H1 (cell line): ENCODE measurements at regions of chr3 and their contacts with region 1.

Region 1: GRCh38 chr3:186540221-186540834 is 3.9 kb downstream of the CRYGS start:
- DNase-seq: peak; percentile 39 to 83
- H3K4me3 ChIP-seq: no peak overlapping the region
- H3K27ac ChIP-seq: no peak overlapping the region
- H3K4me1 ChIP-seq: no peaks in the 10 kb centered on the region
- H3K27me3 ChIP-seq: no peaks in the 10 kb centered on the region
- CTCF ChIP-seq: peak in 2 of 3 experiments; percentile 75 to 77; a peak in 3 of 4 replicates
- EP300 ChIP-seq: no peak
- POLR2A ChIP-seq: no peak
- RAD21 ChIP-seq: peak; percentile 94 to 95

Region 2: DNA sequence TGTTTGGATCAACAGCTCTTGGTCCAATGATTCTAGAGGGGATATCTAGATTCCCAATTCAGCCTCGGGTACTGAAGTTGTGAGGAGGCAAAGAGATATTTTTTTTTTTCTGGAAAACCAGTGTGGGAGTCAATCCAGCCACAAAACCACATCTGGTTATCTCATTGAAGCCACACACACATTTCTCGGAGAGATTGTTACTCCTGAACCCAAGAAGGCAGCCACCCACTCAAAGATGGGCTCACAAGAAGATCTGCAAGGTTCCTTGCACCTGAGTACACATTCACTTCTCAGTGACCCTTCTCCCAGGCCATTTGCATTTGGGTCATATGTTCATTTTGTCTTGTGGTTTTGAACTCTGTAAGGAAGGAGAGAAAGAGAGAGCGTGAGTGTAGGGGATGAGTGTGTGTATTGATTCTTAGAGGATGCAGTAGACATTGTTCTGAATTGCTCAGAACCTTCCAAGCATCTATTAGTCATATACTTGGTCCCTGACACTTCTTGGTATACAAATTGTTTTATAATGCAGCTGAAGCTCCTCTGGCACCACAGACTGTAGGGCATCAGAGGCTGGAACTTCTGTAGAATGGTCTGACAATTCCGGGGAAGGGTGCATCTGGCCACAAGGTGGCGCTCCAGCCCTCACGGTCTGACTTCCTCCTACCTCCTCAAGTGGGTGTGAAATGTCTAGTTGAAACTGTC is 563.2 kb before region 1 on chr3:
- CTCF ChIA-PET with region 1: interaction called, 26 read pairs
- POLR2A ChIA-PET with region 1: no interaction called
- DNase-seq: peak; percentile 41 to 93
- H3K4me3 ChIP-seq: no peak overlapping the region
- H3K27ac ChIP-seq: no peak overlapping the region
- H3K4me1 ChIP-seq: no peaks in the 10 kb centered on the region
- H3K27me3 ChIP-seq: no peaks in the 10 kb centered on the region
- CTCF ChIP-seq: peak; percentile 90 to 99 (median 97)
- EP300 ChIP-seq: no peak
- POLR2A ChIP-seq: no peak
- RAD21 ChIP-seq: peak; percentile 79 to 82

Region 3: GRCh38 chr3:186247821-186248814 is 292.2 kb before region 1 on chr3:
- CTCF ChIA-PET with region 1: interaction called, 76 read pairs
- POLR2A ChIA-PET with region 1: no interaction called
- DNase-seq: no peak
- H3K4me3 ChIP-seq: no peak overlapping the region
- H3K27ac ChIP-seq: no peak overlapping the region
- H3K4me1 ChIP-seq: peaks cover 0 to 3% (median 0%) of the 10 kb centered on the region in 4 experiments; a peak in 1 of 7 replicates
- H3K27me3 ChIP-seq: no peaks in the 10 kb centered on the region
- CTCF ChIP-seq: no peak
- EP300 ChIP-seq: no peak
- POLR2A ChIP-seq: no peak
- RAD21 ChIP-seq: no peak

Region 4: GRCh38 chr3:186277268-186277909 is 262.9 kb before region 1 on chr3:
- CTCF ChIA-PET with region 1: interaction called, 104 read pairs
- POLR2A ChIA-PET with region 1: no interaction called
- DNase-seq: no peak
- H3K4me3 ChIP-seq: no peak overlapping the region
- H3K27ac ChIP-seq: no peak overlapping the region
- H3K4me1 ChIP-seq: no peaks in the 10 kb centered on the region
- H3K27me3 ChIP-seq: no peaks in the 10 kb centered on the region
- CTCF ChIP-seq: peak; percentile 53 to 72 (median 67)
- EP300 ChIP-seq: no peak
- POLR2A ChIP-seq: no peak
- RAD21 ChIP-seq: peak; percentile 86 to 92

Region 5: GRCh38 chr3:186394566-186395217 is 145.6 kb before region 1 on chr3:
- CTCF ChIA-PET with region 1: no interaction called
- POLR2A ChIA-PET with region 1: no interaction called
- DNase-seq: no peak
- H3K4me3 ChIP-seq: no peak overlapping the region
- H3K27ac ChIP-seq: no peak overlapping the region
- H3K4me1 ChIP-seq: no peaks in the 10 kb centered on the region
- H3K27me3 ChIP-seq: no peaks in the 10 kb centered on the region
- CTCF ChIP-seq: no peak
- EP300 ChIP-seq: no peak
- POLR2A ChIP-seq: no peak
- RAD21 ChIP-seq: no peak

Region 6: DNA sequence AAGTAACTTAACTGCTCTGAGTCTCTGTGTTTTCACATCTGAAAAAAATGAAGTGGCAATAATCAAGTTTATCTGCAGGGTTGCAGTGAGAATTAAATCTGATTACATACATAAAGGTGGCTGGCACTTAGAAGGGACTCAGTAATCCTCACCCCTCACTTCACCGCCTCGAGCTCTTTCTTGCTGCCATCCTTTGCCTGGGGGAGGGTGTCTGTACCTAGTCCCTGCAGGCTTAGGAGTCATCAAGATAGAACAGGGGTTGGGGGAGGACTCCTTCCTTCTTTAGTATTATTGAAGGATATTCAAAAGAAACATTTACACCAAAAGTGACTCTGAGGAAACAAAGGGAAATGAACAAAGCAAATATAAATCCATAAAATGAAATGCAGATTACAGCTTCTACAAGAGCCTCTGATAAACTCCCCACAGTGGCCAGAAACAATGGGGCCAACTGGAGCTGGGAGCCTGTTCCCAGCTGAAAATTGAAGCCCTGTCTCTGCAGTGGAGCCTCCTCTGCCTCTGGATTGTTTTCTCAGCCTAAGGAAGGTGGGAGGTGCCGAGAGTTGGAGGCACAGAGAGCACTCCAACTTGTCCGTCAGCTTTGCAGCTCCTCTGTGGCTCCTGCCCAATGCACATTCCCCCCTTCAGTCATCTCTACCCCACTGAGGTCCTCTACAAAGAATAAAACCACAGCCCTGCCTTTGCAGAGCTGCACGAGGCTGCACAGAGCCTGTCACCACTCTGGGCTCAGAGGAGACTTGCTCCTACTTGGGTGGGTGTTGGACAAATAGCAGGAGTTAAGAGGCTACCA is 38.0 kb before region 1 on chr3:
- CTCF ChIA-PET with region 1: interaction called, 13 read pairs
- POLR2A ChIA-PET with region 1: interaction called, 3 read pairs
- DNase-seq: peak in 1 of 2 experiments; percentile 45
- H3K4me3 ChIP-seq: no peak overlapping the region
- H3K27ac ChIP-seq: no peak overlapping the region
- H3K4me1 ChIP-seq: peaks cover 0 to 3% (median 2%) of the 10 kb centered on the region in 4 experiments; a peak in 2 of 7 replicates
- H3K27me3 ChIP-seq: no peaks in the 10 kb centered on the region; a peak in 1 of 7 replicates
- CTCF ChIP-seq: no peak
- EP300 ChIP-seq: no peak
- POLR2A ChIP-seq: no peak
- RAD21 ChIP-seq: no peak

Region 7: GRCh38 chr3:186551387-186551786 is 11.1 kb after region 1 on chr3:
- CTCF ChIA-PET with region 1: interaction called, 57 read pairs
- POLR2A ChIA-PET with region 1: interaction called, 5 read pairs
- DNase-seq: no peak
- H3K4me3 ChIP-seq: no peak overlapping the region
- H3K27ac ChIP-seq: no peak overlapping the region
- H3K4me1 ChIP-seq: no peaks in the 10 kb centered on the region
- H3K27me3 ChIP-seq: no peaks in the 10 kb centered on the region
- CTCF ChIP-seq: no peak
- EP300 ChIP-seq: no peak
- POLR2A ChIP-seq: no peak
- RAD21 ChIP-seq: no peak

Region 8: DNA sequence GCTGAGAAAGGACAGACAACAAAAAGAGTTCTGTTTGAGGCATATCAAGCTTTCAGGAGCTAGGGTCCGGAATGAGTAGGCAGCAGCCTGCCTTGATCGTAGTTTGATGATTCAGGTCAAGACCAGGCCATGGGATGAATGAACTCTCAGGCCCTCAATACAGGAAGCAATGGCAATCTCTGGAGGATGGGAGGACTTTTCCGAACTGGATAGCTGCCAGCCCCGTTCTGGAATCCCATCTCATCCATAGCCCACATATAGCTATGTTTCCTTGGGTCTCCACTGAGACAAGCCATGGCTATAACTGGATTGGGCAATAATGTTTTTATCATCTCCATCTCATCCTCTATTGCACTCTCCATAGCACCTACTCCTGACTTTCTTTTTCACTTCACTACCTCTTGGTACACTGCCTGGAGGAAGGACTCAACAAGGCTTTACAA is 85.3 kb after region 1 on chr3:
- CTCF ChIA-PET with region 1: no interaction called
- POLR2A ChIA-PET with region 1: no interaction called
- DNase-seq: no peak
- H3K4me3 ChIP-seq: no peak overlapping the region
- H3K27ac ChIP-seq: no peak overlapping the region
- H3K4me1 ChIP-seq: no peaks in the 10 kb centered on the region
- H3K27me3 ChIP-seq: peaks cover 0 to 2% (median 0%) of the 10 kb centered on the region in 4 experiments; a peak in 1 of 7 replicates
- CTCF ChIP-seq: no peak
- EP300 ChIP-seq: no peak
- POLR2A ChIP-seq: no peak
- RAD21 ChIP-seq: no peak

Region 9: GRCh38 chr3:187208159-187208558 is 667.8 kb after region 1 on chr3:
- CTCF ChIA-PET with region 1: no interaction called
- POLR2A ChIA-PET with region 1: no interaction called
- DNase-seq: no peak
- H3K4me3 ChIP-seq: no peak overlapping the region
- H3K27ac ChIP-seq: no peak overlapping the region
- H3K4me1 ChIP-seq: peaks cover 3 to 14% (median 7%) of the 10 kb centered on the region in 4 experiments; a peak in 4 of 7 replicates
- H3K27me3 ChIP-seq: no peaks in the 10 kb centered on the region
- CTCF ChIP-seq: no peak
- EP300 ChIP-seq: no peak
- POLR2A ChIP-seq: no peak
- RAD21 ChIP-seq: no peak